AG04449 (cell line): ENCODE measurements at regions of chr22 and their contacts with region 1.

Region 1: GRCh38 chr22:45645526-45646414 is 25.9 kb upstream of the ATXN10 start:
- DNase-seq: no peak
- H3K4me3 ChIP-seq: peak overlapping the region; percentile 43
- CTCF ChIP-seq: peak; percentile 89

Region 2: GRCh38 chr22:45629469-45630089 is 16.2 kb before region 1 on chr22:
- CTCF ChIA-PET with region 1: interaction called, 15 read pairs
- POLR2A ChIA-PET with region 1: no interaction called
- DNase-seq: no peak
- H3K4me3 ChIP-seq: no peak overlapping the region
- CTCF ChIP-seq: no peak

Region 3: GRCh38 chr22:45831394-45831793 is 185.6 kb after region 1 on chr22:
- CTCF ChIA-PET with region 1: interaction called, 11 read pairs
- POLR2A ChIA-PET with region 1: no interaction called
- DNase-seq: no peak
- H3K4me3 ChIP-seq: no peak overlapping the region
- CTCF ChIP-seq: peak; percentile 43

Region 4: GRCh38 chr22:45845076-45845487 is 199.3 kb after region 1 on chr22:
- CTCF ChIA-PET with region 1: interaction called, 16 read pairs
- POLR2A ChIA-PET with region 1: no interaction called
- DNase-seq: no peak
- H3K4me3 ChIP-seq: no peak overlapping the region
- CTCF ChIP-seq: no peak

Region 5: DNA sequence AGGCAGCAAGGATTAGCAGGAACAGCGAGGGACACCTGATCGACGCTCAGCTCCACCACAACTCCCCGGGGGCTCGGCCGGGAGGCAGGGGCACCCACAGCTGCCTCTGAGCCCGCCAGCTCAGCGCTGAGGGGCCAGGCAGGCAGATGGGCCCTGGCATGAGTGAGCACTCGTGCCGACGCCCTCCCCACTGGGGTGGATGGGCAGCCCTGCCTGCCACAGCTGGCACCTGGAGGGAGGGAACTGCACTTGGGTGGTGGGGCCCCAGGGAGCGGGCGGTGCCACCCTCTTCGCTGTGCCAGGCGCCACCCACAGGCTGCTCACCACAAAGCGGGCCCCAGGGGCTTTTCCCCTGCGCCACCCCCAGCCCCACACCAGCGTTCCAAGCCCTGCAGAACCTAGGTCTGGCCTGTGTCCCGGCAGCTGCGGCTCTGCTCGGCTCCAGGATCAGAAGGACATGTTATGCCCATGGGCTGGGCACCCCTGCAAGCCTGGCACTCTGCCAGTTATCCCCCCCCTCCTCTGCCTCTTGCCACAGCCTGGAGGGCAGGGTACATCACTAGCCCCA is 302.4 kb after region 1 on chr22:
- CTCF ChIA-PET with region 1: no interaction called
- POLR2A ChIA-PET with region 1: no interaction called
- DNase-seq: no peak
- H3K4me3 ChIP-seq: no peak overlapping the region
- CTCF ChIP-seq: no peak

Region 6: DNA sequence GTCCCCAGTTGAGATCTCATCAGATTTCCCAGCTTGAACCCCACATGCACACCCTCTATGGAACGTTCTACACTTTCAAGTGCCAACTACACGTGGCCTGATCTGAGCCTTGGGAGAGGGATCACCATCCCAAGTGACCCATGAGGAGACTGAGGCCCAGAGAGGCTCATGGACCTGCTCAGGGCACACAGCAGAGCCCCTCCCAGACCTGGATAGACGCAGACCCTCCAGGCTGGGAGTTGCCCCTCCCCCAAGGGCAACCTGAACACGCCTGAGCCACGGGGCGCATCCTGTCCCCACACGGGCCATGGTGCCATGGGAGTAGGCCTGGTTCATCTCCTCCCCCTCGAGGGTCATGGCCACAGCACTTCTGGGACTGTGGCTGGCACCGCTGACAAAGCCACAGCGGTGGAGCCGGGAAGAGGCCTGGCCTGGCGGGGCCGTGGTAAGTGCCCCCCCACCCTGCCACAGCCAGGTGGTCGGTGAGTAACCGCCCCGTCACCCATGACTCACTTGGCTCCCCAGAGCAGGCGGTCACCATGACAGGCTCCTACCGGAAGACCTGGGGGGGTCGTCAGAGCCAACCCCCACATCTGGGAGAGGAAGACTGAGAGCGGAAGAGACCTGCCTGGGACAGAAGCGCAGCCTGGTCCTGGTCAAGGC is 323.1 kb after region 1 on chr22:
- CTCF ChIA-PET with region 1: interaction called, 13 read pairs
- POLR2A ChIA-PET with region 1: no interaction called
- DNase-seq: peak; percentile 12
- H3K4me3 ChIP-seq: no peak overlapping the region
- CTCF ChIP-seq: no peak